ENCODE measurements at regions of chr1 and their contacts with region 1.

Region 1: GRCh38 chr1:19596714-19597495 is 47.2 kb upstream of the NBL1 start:
- DNase-seq: peak; percentile 99

Region 2: DNA sequence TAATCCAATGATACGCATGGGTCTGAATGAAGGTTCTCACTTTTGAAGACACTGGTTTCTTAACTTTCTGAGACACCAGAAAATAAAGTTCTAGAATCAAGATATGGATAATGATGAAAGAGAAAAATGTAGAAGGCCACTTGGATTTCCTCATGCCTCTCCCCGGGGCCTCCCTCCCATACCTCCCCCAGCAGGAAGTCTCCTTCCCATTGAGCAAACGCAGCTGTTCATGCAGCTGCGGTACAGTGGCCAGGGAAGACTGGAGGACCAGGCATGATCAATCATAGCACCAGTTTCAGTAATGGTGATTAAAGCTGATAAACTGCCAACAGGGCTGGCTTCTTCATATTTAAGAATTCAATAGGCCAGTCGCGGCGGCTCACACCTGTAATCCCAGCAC is 375.9 kb before region 1 on chr1:
- intact Hi-C with region 1: no loop called
- DNase-seq: no peak

Region 3: DNA sequence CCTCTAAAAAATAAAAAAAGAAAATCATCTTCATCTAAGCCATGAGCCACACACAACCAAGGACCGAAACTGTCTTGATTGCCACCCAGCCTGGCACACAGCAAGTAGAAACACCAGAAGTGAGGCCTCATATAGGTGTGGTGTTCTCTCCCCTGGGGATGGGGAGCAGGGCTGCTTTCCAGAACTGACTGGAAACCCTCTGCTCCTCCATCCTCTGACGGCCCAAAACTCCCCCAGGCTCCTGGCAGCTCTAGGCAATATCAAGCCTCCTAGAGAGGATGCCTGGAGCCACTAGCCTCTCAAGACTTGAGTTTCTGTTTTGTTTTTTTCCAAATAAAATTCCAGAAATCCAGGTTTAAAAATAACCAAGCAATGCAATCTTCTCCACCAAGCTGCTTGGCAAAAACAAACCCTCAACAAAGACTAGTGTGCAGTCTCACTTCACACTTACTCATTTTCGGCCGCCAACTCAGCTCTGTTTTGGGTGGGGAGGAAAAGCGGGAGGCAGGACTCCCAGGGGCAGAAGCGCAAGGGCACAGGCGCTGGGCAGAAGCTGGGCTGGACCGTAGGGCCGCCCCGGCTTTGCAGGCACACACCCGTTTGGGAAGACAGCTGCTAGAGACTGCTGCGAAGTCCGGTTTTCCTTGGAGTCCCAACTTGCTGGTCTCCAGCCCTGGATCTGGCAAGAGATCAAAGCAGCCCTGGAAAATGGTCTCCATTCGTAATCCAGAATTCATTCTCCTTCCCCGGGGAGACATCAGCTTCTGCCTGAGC is 33.4 kb before region 1 on chr1:
- intact Hi-C with region 1: loop called in 1 of 2 experiments (anchors 2 kb)
- DNase-seq: peak; percentile 87

Measured in posterior vena cava (tissue), 2 donors.